Heart right ventricle (tissue), 16 donors: ENCODE measurements at regions of chr2 and their contacts with region 1.

Region 1: GRCh38 chr2:228652366-228652765 is 470.9 kb upstream of the SPHKAP start:
- DNase-seq: no peak
- ATAC-seq: no peak
- H3K4me3 ChIP-seq: no peak overlapping the region
- H3K27ac ChIP-seq: no peak overlapping the region
- H3K4me1 ChIP-seq: peaks cover 0 to 12% (median 0%) of the 10 kb centered on the region in 9 donors
- H3K27me3 ChIP-seq: no peaks in the 10 kb centered on the region
- CTCF ChIP-seq: no peak

Region 2: DNA sequence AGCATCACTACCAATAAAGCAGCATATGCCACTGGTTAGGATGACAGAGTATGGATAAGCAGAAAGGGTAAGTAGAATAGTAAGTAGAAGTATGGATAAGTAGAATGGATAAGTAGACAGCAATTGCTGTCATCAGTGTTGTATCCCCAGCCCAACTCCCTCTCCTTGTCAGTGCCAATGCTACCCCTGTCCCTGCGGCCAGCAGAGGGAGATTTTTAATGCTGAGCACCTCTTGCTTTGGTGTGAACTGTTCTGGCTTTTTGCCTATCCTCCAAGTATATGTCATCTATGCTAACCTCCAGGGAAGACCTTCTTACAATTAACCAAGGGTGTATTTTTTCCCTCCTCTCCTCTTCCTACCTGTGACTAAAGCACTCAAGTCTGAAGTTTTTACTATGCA is 334.1 kb before region 1 on chr2:
- intact Hi-C with region 1: loop called in 6 of 10 experiments (anchors 5 to 10 kb)
- DNase-seq: peak; percentile 14 to 38
- ATAC-seq: peak in 7 of 8 donors; percentile 61 to 82 (median 77)
- H3K4me3 ChIP-seq: no peak overlapping the region
- H3K27ac ChIP-seq: no peak overlapping the region
- H3K4me1 ChIP-seq: peaks cover 0 to 19% (median 13%) of the 10 kb centered on the region in 9 donors
- H3K27me3 ChIP-seq: no peaks in the 10 kb centered on the region
- CTCF ChIP-seq: peak in 7 of 9 donors; percentile 42 to 60 (median 53)

Region 3: GRCh38 chr2:228329282-228329681 is 323.1 kb before region 1 on chr2:
- intact Hi-C with region 1: loop called in 6 of 10 experiments (anchors 5 to 10 kb)
- DNase-seq: peak; percentile 28 to 43
- ATAC-seq: peak; percentile 61 to 98 (median 91)
- H3K4me3 ChIP-seq: no peak overlapping the region
- H3K27ac ChIP-seq: peak overlapping the region in 8 of 10 donors; percentile 20 to 73 (median 62)
- H3K4me1 ChIP-seq: peaks cover 0 to 10% (median 0%) of the 10 kb centered on the region in 9 donors
- H3K27me3 ChIP-seq: no peaks in the 10 kb centered on the region
- CTCF ChIP-seq: no peak

Region 4: DNA sequence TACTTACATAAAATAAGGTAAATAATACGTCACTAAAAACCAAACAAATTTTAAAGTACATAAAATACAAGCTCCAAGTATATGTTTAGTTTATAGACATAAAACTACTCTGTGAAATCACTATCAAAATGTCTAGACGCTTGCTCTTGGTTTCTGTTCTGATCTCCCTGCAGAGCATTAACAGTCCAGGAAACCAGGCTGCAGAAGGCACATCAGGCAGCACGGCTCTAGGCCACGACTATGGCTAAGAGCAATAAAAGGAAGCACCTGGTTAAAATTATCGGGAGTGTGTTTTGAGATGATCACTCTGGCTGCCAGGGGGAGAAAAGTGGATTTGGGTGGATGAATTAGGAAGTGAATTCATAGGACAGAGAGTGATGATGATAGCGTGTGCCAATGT is 274.8 kb before region 1 on chr2:
- intact Hi-C with region 1: loop called in 2 of 10 experiments (anchors 5 kb)
- DNase-seq: no peak
- ATAC-seq: peak in 6 of 8 donors; percentile 15 to 63 (median 38)
- H3K4me3 ChIP-seq: no peak overlapping the region
- H3K27ac ChIP-seq: peak overlapping the region in 7 of 10 donors; percentile 42 to 81 (median 66)
- H3K4me1 ChIP-seq: peaks cover 0 to 23% (median 0%) of the 10 kb centered on the region in 9 donors
- H3K27me3 ChIP-seq: no peaks in the 10 kb centered on the region
- CTCF ChIP-seq: no peak